ENCODE measurements at regions of chr5 and their contacts with region 1.

Region 1: DNA sequence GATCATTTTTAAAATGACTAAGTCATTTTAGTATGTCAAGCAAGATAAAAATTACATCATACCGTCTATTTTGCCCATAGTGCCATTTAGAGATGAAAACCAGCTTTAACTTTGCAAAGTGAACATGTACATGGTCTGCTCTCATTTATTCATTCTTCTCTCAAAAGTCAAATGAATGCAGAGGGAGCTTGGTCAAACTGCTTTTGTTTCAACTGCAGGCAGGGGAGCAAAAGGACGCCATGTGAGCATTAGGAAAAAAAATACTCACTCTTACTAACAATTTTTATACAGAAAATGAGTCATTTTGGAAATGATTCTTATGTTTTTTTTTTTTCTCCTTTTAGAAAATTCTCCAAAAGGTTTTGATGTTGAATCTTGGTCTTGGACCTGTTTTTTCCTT is 15.7 kb downstream of the SCGB3A1 start:
- DNase-seq: no peak
- H3K4me3 ChIP-seq: no peak overlapping the region
- H3K27ac ChIP-seq: no peak overlapping the region
- H3K4me1 ChIP-seq: no peaks in the 10 kb centered on the region
- H3K27me3 ChIP-seq: no peaks in the 10 kb centered on the region
- CTCF ChIP-seq: no peak
- POLR2A ChIP-seq: no peak

Region 2: DNA sequence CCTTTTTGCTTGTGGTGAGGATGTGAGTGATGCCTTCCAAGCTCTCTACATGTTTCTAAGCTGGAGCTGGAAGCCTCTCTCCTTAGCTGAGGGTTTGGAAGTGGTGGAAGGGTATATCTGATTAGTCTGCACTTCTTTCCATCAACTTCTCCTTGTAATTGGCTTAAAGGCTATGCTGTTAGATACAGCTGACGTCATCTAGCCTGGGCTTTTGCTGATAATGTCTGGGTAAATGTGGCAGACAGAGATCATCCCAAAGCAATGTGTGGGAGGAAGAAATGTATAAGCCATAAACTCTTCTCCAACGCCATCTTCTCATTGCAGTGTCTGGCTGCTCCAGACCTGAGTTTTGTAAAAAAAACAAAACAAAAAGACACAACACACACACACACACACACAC is 1486.1 kb before region 1 on chr5:
- intact Hi-C with region 1: no loop called
- DNase-seq: no peak
- H3K4me3 ChIP-seq: no peak overlapping the region
- H3K27ac ChIP-seq: no peak overlapping the region
- H3K4me1 ChIP-seq: no peaks in the 10 kb centered on the region
- H3K27me3 ChIP-seq: no peaks in the 10 kb centered on the region
- CTCF ChIP-seq: no peak
- POLR2A ChIP-seq: no peak

Region 3: GRCh38 chr5:180271221-180271620 is 304.4 kb before region 1 on chr5:
- intact Hi-C with region 1: no loop called
- DNase-seq: no peak
- H3K4me3 ChIP-seq: no peak overlapping the region
- H3K27ac ChIP-seq: no peak overlapping the region
- H3K4me1 ChIP-seq: no peaks in the 10 kb centered on the region
- H3K27me3 ChIP-seq: no peaks in the 10 kb centered on the region
- CTCF ChIP-seq: no peak
- POLR2A ChIP-seq: no peak

Region 4: DNA sequence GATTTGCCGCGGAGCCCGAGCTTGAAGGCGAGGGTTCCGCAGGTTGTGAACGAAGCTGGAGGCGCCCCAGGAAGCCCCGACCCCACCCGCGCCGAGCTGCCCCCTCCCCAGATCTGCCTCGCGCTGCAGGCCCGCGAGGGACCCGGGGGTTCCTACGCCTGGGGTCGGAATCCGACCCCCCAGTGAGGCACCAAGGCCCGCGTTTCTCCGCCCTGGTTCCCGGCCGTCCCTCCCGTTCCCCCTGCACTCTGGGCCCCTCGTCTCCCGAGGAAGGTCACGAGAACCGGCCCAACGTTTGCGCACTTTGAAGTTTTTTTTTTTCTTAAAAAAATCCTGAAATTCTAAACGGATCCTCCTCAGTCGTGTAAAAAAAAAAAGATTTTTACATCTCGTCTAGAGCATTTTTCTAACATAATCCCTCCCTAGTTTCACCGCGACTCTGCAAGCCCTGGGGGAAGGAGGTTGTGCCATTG is 221.6 kb before region 1 on chr5:
- intact Hi-C with region 1: no loop called
- DNase-seq: no peak
- H3K4me3 ChIP-seq: peak overlapping the region; percentile 75 to 94 (median 87)
- H3K27ac ChIP-seq: peak overlapping the region in 1 of 2 donors; percentile 68
- H3K4me1 ChIP-seq: peaks cover 0 to 6% of the 10 kb centered on the region in 2 donors
- H3K27me3 ChIP-seq: peaks cover 0 to 3% of the 10 kb centered on the region in 2 donors
- CTCF ChIP-seq: no peak
- POLR2A ChIP-seq: no peak

Region 5: GRCh38 chr5:180523629-180524466 is 51.7 kb before region 1 on chr5:
- intact Hi-C with region 1: loop called (anchors 2 kb)
- DNase-seq: no peak
- H3K4me3 ChIP-seq: no peak overlapping the region
- H3K27ac ChIP-seq: no peak overlapping the region
- H3K4me1 ChIP-seq: peaks cover 0 to 4% of the 10 kb centered on the region in 2 donors
- H3K27me3 ChIP-seq: no peaks in the 10 kb centered on the region
- CTCF ChIP-seq: no peak
- POLR2A ChIP-seq: no peak

Region 6: DNA sequence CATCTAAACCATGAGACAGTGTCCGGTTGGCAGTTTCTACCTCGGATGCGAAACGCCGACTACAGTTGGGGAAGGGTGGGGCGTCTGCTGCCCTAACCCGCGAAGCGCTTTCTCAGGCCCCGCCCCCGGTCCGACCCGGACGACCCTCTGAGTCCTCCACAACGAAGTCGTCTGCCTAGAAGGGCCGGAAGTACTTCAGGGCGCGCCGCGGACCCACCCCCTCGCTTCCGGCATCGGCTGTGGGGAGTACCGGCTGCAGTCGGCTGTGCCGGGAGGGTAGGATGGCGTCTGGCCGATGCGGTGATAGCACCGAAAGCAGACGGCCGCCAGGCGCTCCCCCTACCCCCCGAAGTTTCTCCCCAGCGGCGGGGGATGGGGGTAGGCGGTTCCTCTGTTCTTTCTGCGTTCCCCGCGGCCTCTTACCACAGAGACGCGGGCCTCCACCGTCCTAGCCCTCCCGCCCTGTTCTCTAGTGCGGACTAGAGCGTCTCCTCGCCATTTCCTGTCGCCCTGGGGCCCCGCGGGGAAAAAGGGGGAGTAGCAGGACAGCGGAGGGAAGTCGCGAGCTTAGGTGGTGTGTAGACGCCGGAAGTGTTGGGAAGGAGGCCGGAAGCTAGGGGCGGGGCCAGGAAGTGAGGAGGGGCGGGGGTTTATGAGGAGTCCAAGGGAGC is 647.6 kb after region 1 on chr5 and contains the start of gene TRIM41:
- intact Hi-C with region 1: no loop called
- DNase-seq: peak; percentile 97
- H3K4me3 ChIP-seq: peak within 1 kb of the TSS; percentile 66 to 85 (median 74)
- H3K27ac ChIP-seq: peak within 1 kb of the TSS; percentile 93 to 94
- H3K4me1 ChIP-seq: no peaks in the 10 kb centered on the region
- H3K27me3 ChIP-seq: no peaks in the 10 kb centered on the region
- CTCF ChIP-seq: peak in 1 of 3 donors; percentile 14
- POLR2A ChIP-seq: peak; percentile 95
- total RNA-seq, gene TRIM41: 14.1 to 16.0 (median 15.1) TPM

Measured in breast epithelium (tissue), 4 donors.